GM12878 (cell line): ENCODE measurements at regions of chr21 and their contacts with region 1.

Region 1: GRCh38 chr21:33608559-33608958 is 20.1 kb upstream of the DONSON start:
- DNase-seq: no peak
- ATAC-seq: no peak
- H3K4me3 ChIP-seq: no peak overlapping the region
- H3K27ac ChIP-seq: no peak overlapping the region
- H3K4me1 ChIP-seq: no peaks in the 10 kb centered on the region
- H3K27me3 ChIP-seq: no peaks in the 10 kb centered on the region
- CTCF ChIP-seq: no peak
- EP300 ChIP-seq: no peak
- POLR2A ChIP-seq: no peak
- RAD21 ChIP-seq: no peak

Region 2: GRCh38 chr21:33479679-33480480 is 128.7 kb before region 1 on chr21 and contains the start of gene TMEM50B:
- CTCF ChIA-PET with region 1: interaction called, 17 read pairs
- POLR2A ChIA-PET with region 1: no interaction called
- RAD21 ChIA-PET with region 1: interaction called, 7 read pairs
- SMC1A ChIA-PET with region 1: no interaction called
- in situ Hi-C with region 1: no loop called
- intact Hi-C with region 1: no loop called
- DNase-seq: peak; percentile 79
- ATAC-seq: peak; percentile 95
- H3K4me3 ChIP-seq: peak within 1 kb of the TSS; percentile 93
- H3K27ac ChIP-seq: peak within 1 kb of the TSS; percentile 82
- H3K4me1 ChIP-seq: peaks cover 3% of the 10 kb centered on the region; the same call in 1 of the 2 replicates
- H3K27me3 ChIP-seq: no peaks in the 10 kb centered on the region
- CTCF ChIP-seq: peak; percentile 25 to 52 (median 33); a peak in 4 of 6 replicates
- EP300 ChIP-seq: peak in 1 of 2 experiments; percentile 20; a peak in 1 of 4 replicates
- POLR2A ChIP-seq: peak; percentile 94
- RAD21 ChIP-seq: peak; percentile 12; the same call in 1 of the 2 replicates
- polyA plus RNA-seq, gene TMEM50B: 15.9 to 23.8 TPM

Region 3: GRCh38 chr21:33542640-33543504 is 65.7 kb before region 1 on chr21 and contains the start of gene SON:
- CTCF ChIA-PET with region 1: interaction called, 15 read pairs
- POLR2A ChIA-PET with region 1: no interaction called
- RAD21 ChIA-PET with region 1: interaction called, 3 read pairs
- SMC1A ChIA-PET with region 1: interaction called, 10 read pairs
- in situ Hi-C with region 1: no loop called
- intact Hi-C with region 1: no loop called
- DNase-seq: peak; percentile 95
- ATAC-seq: peak; percentile 94
- H3K4me3 ChIP-seq: peak within 1 kb of the TSS; percentile 96
- H3K27ac ChIP-seq: peak within 1 kb of the TSS; percentile 100
- H3K4me1 ChIP-seq: no peaks in the 10 kb centered on the region
- H3K27me3 ChIP-seq: no peaks in the 10 kb centered on the region
- CTCF ChIP-seq: no peak
- EP300 ChIP-seq: no peak
- POLR2A ChIP-seq: peak; percentile 89
- RAD21 ChIP-seq: no peak
- polyA plus RNA-seq, gene SON: 418 to 788 TPM

Region 4: GRCh38 chr21:33572350-33572749 is 36.2 kb before region 1 on chr21:
- CTCF ChIA-PET with region 1: interaction called, 15 read pairs
- POLR2A ChIA-PET with region 1: no interaction called
- RAD21 ChIA-PET with region 1: interaction called, 6 read pairs
- SMC1A ChIA-PET with region 1: interaction called, 4 read pairs
- in situ Hi-C with region 1: no loop called
- intact Hi-C with region 1: no loop called
- DNase-seq: no peak
- ATAC-seq: no peak
- H3K4me3 ChIP-seq: no peak overlapping the region
- H3K27ac ChIP-seq: no peak overlapping the region
- H3K4me1 ChIP-seq: no peaks in the 10 kb centered on the region
- H3K27me3 ChIP-seq: no peaks in the 10 kb centered on the region
- CTCF ChIP-seq: no peak
- EP300 ChIP-seq: no peak
- POLR2A ChIP-seq: no peak
- RAD21 ChIP-seq: no peak

Region 5: GRCh38 chr21:33619726-33620125 is 11.2 kb after region 1 on chr21:
- CTCF ChIA-PET with region 1: interaction called, 27 read pairs
- POLR2A ChIA-PET with region 1: no interaction called
- RAD21 ChIA-PET with region 1: interaction called, 6 read pairs
- SMC1A ChIA-PET with region 1: interaction called, 3 read pairs
- in situ Hi-C with region 1: no loop called
- intact Hi-C with region 1: no loop called
- DNase-seq: no peak
- ATAC-seq: no peak
- H3K4me3 ChIP-seq: no peak overlapping the region
- H3K27ac ChIP-seq: no peak overlapping the region
- H3K4me1 ChIP-seq: no peaks in the 10 kb centered on the region
- H3K27me3 ChIP-seq: no peaks in the 10 kb centered on the region
- CTCF ChIP-seq: no peak
- EP300 ChIP-seq: no peak
- POLR2A ChIP-seq: no peak
- RAD21 ChIP-seq: no peak

Region 6: GRCh38 chr21:33651965-33652680 is 43.6 kb after region 1 on chr21:
- CTCF ChIA-PET with region 1: no interaction called
- POLR2A ChIA-PET with region 1: no interaction called
- RAD21 ChIA-PET with region 1: no interaction called
- SMC1A ChIA-PET with region 1: no interaction called
- in situ Hi-C with region 1: no loop called
- intact Hi-C with region 1: no loop called
- DNase-seq: no peak
- ATAC-seq: no peak
- H3K4me3 ChIP-seq: no peak overlapping the region
- H3K27ac ChIP-seq: no peak overlapping the region
- H3K4me1 ChIP-seq: no peaks in the 10 kb centered on the region
- H3K27me3 ChIP-seq: no peaks in the 10 kb centered on the region; a peak in 1 of 4 replicates
- CTCF ChIP-seq: no peak
- EP300 ChIP-seq: no peak
- POLR2A ChIP-seq: no peak
- RAD21 ChIP-seq: no peak

Region 7: GRCh38 chr21:33751120-33751519 is 142.6 kb after region 1 on chr21:
- CTCF ChIA-PET with region 1: no interaction called
- POLR2A ChIA-PET with region 1: no interaction called
- RAD21 ChIA-PET with region 1: no interaction called
- SMC1A ChIA-PET with region 1: no interaction called
- in situ Hi-C with region 1: no loop called
- intact Hi-C with region 1: no loop called
- DNase-seq: no peak
- ATAC-seq: no peak
- H3K4me3 ChIP-seq: no peak overlapping the region
- H3K27ac ChIP-seq: no peak overlapping the region
- H3K4me1 ChIP-seq: no peaks in the 10 kb centered on the region
- H3K27me3 ChIP-seq: no peaks in the 10 kb centered on the region
- CTCF ChIP-seq: no peak
- EP300 ChIP-seq: no peak
- POLR2A ChIP-seq: no peak
- RAD21 ChIP-seq: no peak